Activated CD4-positive, alpha-beta memory T cell treated with anti-CD3 and anti-CD28 coated beads, Interleukin-2, amount 10 ng/mL, durations not matched to agents 7 days and 5 days (primary cell): ENCODE measurements at regions of chr1 and their contacts with region 1.

Region 1: DNA sequence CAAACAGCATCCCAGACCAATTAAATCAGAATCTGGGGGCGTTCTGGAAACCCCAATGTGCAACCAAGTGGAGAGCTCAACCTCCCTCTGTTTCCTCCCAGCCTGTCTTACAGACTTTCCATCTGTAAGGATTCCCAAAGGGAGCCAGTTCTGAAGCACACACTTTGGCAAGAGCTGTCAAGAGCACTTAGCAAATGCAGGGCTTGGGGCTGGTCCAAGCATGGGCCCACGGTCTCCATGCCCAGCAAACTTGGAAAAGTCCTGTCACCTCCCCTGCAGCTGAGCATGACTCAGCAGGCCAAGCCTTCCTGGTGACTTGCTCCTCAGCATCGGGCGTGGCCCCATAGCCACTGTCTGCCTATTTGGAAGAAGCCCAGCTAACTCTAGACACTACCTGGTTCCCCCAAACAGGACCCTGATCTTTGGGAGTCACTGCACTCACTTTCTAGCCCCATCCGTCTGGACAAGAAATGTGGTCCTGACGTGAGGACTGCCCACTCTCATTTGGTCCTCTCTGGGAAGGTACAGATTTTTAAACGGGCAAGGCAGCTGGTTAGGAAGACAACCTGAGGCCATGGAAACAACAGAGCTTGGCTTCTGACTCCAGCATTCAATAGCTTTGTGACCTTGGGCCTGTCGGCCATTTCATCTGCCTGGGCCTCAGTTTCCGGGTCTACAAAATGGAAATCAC is 16.9 kb downstream of the SLC2A1 start:
- DNase-seq: peak; percentile 59
- H3K4me3 Mint-ChIP-seq: peak overlapping the region; percentile 50
- H3K27ac Mint-ChIP-seq: peak overlapping the region; percentile 94
- H3K4me1 Mint-ChIP-seq: peaks cover 99% of the 10 kb centered on the region
- H3K27me3 Mint-ChIP-seq: no peaks in the 10 kb centered on the region

Region 2: GRCh38 chr1:42958488-42959319 is 16.9 kb after region 1 on chr1 and contains the start of gene SLC2A1:
- CTCF ChIA-PET with region 1: interaction called, 12 read pairs
- POLR2A ChIA-PET with region 1: interaction called, 387 read pairs
- DNase-seq: peak; percentile 96
- H3K4me3 Mint-ChIP-seq: peak within 1 kb of the TSS; percentile 99
- H3K27ac Mint-ChIP-seq: peak within 1 kb of the TSS; percentile 100
- H3K4me1 Mint-ChIP-seq: peaks cover 63% of the 10 kb centered on the region
- H3K27me3 Mint-ChIP-seq: peaks cover 12% of the 10 kb centered on the region
- total RNA-seq, gene SLC2A1: 153 TPM